ENCODE measurements at regions of chr14 and their contacts with region 1.

Region 1: DNA sequence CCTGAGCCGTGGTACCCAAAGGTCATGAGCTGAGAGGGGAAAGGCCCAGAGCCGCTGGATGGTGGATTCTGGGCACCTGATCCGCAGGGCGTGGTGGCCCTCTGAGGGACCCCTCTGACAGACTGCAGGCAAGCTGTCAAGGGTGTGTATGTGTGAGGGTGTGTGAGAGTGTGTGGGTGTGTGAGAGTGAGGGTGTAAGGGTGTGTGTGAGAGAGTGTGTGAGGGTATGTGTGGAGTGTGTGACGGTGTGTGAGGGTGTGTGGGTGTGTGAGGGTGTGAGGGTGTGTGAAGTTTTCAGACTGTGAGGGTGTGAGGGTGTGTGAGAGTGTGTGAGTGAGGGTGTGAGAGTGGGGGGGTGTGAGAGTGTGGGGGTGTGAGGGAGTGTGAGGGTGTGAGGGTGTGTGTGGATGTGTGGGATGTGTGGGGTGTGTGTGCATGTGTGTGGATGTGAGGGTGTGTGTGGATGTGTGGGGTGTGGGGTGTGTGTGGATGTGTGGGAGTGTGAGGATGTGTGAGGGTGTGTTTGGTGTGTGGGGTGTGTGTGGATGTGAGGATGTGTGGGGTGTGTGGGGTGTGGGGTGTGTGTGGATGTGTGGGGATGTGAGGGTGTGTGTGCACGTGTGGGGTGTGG is 156.7 kb downstream of the TMEM121 start:
- DNase-seq: no peak
- ATAC-seq: no peak
- H3K4me3 ChIP-seq: no peak overlapping the region
- H3K27ac ChIP-seq: no peak overlapping the region
- H3K4me1 ChIP-seq: no peaks in the 10 kb centered on the region
- CTCF ChIP-seq: no peak
- EP300 ChIP-seq: no peak
- POLR2A ChIP-seq: no peak
- RAD21 ChIP-seq: no peak

Region 2: DNA sequence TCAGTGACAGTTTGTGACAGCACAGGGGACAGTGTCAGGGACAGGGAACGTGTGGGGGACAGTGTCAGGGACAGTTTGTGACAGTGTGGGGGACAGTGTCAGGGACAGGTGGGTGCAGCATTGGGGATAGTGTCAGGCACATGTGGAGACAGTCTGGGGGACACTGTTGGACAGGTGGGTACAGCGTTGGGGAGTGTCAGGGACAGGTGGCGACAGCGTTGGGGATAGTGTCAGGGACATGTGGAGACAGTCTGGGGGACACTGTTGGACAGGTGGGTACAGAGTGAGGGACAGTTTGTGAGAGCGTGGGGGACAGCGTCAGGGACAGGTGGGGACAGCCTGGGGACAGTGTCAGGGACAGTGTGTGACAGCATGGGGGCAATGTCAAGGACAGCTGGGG is 16.6 kb before region 1 on chr14:
- CTCF ChIA-PET with region 1: no interaction called
- POLR2A ChIA-PET with region 1: no interaction called
- DNase-seq: no peak
- ATAC-seq: no peak
- H3K4me3 ChIP-seq: no peak overlapping the region
- H3K27ac ChIP-seq: no peak overlapping the region
- H3K4me1 ChIP-seq: no peaks in the 10 kb centered on the region
- CTCF ChIP-seq: no peak
- EP300 ChIP-seq: no peak
- POLR2A ChIP-seq: no peak
- RAD21 ChIP-seq: no peak

Region 3: DNA sequence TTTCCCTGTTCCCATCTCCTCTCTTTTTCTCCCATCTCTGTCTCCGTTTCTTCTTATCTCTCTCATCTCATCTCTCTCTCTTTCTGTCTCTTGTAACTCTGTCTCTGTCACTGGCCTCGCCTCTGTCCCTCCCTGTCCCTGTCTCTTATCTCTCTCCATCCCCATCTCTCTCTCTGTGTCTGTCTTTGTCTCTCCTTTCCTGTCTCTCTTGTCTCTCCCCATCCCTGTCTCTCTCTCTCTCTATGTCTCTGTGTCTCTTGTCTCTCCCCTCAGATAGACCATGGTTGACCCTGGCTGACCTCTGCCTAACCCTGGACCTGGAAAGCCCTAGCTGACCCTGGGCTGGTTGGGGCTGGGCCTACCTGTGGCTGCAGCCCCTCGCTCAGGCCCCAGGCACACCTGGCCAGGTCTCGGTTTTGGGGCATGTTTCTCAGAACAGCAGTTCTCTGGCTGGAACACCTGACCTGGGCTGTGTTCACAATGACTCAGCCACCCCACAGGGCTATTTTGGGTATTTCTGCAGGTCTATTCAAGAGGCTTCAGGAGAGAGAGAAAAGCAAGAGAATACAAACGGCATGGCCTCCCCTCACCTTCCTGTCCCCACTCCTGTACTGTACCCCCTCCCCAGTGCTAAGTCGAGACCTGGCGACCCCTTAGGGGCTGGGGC is 17.7 kb after region 1 on chr14:
- CTCF ChIA-PET with region 1: no interaction called
- POLR2A ChIA-PET with region 1: no interaction called
- DNase-seq: no peak
- ATAC-seq: no peak
- H3K4me3 ChIP-seq: no peak overlapping the region
- H3K27ac ChIP-seq: no peak overlapping the region
- H3K4me1 ChIP-seq: no peaks in the 10 kb centered on the region
- CTCF ChIP-seq: no peak
- EP300 ChIP-seq: no peak
- POLR2A ChIP-seq: no peak
- RAD21 ChIP-seq: no peak

Region 4: GRCh38 chr14:105944632-105945610 is 261.9 kb after region 1 on chr14:
- CTCF ChIA-PET with region 1: interaction called, 14 read pairs
- POLR2A ChIA-PET with region 1: no interaction called
- DNase-seq: peak; percentile 38 to 70
- ATAC-seq: peak; percentile 87 to 96
- H3K4me3 ChIP-seq: no peak overlapping the region
- H3K27ac ChIP-seq: no peak overlapping the region
- H3K4me1 ChIP-seq: no peaks in the 10 kb centered on the region
- CTCF ChIP-seq: peak; percentile 77
- EP300 ChIP-seq: no peak
- POLR2A ChIP-seq: no peak
- RAD21 ChIP-seq: peak; percentile 84 to 90

Measured in A549 (cell line).